Activated naive CD4-positive, alpha-beta T cell treated with anti-CD3 and anti-CD28 coated beads for 36 hours (primary cell): ENCODE measurements at regions of chr11 and their contacts with region 1.

Region 1: GRCh38 chr11:18115360-18116127 is 9.7 kb upstream of the SAAL1 start:
- DNase-seq: peak; percentile 73
- H3K4me3 Mint-ChIP-seq: no peak overlapping the region
- H3K27ac Mint-ChIP-seq: no peak overlapping the region
- H3K4me1 Mint-ChIP-seq: no peaks in the 10 kb centered on the region
- H3K27me3 Mint-ChIP-seq: peaks cover 14% of the 10 kb centered on the region

Region 2: DNA sequence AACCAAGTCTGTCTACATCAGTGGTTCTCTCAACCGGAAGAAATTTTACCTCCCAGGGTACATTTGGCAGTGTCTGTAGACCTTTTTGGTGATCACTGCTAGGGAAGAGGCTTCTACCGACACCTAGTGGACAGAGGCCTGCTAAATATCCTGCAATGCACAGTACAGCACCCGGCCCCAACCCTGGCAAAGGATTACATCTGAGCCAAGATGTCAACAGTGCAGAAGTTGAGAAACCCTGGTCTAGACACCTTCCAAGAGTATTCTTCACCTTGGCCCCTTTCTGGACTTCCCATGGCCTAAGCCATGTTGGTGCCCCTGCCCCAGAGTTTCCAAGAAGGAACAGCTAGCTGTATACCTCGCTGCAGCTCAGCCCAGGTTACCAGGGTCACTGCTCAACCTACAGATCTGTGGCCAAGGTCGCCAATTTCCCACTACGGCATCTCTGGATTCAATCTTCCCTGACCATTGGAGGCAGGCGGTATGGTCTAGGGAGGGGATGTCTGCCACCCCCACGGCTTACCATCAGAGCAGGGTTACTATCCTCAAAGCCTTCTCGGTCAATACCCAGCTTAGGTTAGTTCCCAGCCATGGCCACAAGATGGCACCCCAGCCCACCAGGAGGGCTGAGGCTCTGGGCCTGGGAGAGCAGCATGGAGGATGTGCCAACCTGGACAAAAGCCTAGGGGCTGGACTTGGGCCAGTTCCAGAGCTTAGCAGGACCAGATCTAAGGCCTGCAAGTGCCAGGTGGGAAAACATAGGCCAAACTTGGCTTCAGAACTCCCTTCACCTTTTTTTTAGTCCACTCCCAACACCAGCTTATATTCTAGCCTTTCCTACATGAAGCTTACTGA is 384.7 kb before region 1 on chr11:
- CTCF ChIA-PET with region 1: interaction called, 12 read pairs
- intact Hi-C with region 1: no loop called
- DNase-seq: peak; percentile 80
- H3K4me3 Mint-ChIP-seq: no peak overlapping the region
- H3K27ac Mint-ChIP-seq: no peak overlapping the region
- H3K4me1 Mint-ChIP-seq: peaks cover 5% of the 10 kb centered on the region
- H3K27me3 Mint-ChIP-seq: peaks cover 43% of the 10 kb centered on the region

Region 3: GRCh38 chr11:17839973-17840611 is 275.5 kb before region 1 on chr11:
- CTCF ChIA-PET with region 1: no interaction called
- intact Hi-C with region 1: no loop called
- DNase-seq: no peak
- H3K4me3 Mint-ChIP-seq: no peak overlapping the region
- H3K27ac Mint-ChIP-seq: no peak overlapping the region
- H3K4me1 Mint-ChIP-seq: no peaks in the 10 kb centered on the region
- H3K27me3 Mint-ChIP-seq: no peaks in the 10 kb centered on the region

Region 4: DNA sequence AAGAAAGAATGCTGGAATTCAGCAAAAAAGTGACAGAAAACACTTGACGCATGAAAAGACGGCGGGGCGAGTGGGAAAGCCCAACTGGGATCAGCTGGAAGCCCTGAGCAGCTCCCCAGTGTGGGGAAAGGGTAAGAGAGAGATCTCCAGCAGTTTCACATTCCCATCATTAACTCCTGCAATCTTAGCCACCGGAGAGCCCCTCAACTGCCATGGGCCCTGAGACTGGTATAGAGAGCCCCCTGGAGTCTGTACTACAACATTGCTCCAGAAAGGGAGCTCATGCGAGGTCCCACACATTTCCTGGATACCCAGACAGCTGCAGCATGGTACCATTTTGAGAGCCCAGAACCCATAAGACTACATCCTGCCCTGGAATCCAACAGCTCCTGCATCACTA is 88.2 kb after region 1 on chr11:
- CTCF ChIA-PET with region 1: interaction called, 24 read pairs
- intact Hi-C with region 1: loop called (anchors 1 kb)
- DNase-seq: no peak
- H3K4me3 Mint-ChIP-seq: no peak overlapping the region
- H3K27ac Mint-ChIP-seq: no peak overlapping the region
- H3K4me1 Mint-ChIP-seq: no peaks in the 10 kb centered on the region
- H3K27me3 Mint-ChIP-seq: peaks cover 38% of the 10 kb centered on the region

Region 5: DNA sequence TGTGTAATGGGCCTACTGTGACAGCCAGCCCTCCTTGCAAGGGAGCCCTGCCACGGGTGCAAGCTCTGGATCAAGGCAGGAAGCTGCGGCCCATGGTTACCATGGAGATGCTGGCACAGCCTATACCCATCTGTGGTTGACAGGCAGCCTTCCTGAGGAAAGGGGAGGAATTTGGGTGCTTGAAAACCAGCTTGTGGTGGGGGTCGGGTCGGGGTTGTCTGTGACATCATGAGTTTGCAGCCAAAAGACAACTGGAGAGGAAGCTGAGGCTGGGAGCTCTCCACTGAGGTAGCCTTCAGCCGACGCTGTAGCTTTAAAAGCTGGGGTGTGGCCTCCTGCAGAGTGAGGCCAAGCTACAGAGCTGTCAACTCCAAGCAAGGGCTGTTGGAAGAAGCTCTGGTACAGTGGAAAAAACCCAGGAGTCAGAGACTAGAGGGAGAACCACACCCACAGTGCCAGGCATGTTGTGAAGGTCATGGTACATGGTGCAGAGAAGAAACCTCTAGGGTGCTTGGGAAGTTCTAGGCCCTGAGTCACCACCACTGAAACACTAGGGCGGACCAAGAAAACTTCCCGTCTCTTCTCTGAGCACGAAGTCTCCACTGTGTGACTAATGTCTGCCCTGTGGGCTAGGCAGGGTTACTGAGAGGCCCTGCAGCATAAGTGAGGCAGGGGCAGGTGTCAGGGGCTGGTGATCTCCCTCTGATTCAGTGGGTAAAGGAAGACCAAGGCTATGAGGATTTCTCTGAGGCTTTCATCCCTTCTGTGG is 268.0 kb after region 1 on chr11:
- CTCF ChIA-PET with region 1: no interaction called
- intact Hi-C with region 1: no loop called
- DNase-seq: peak; percentile 92
- H3K4me3 Mint-ChIP-seq: peak overlapping the region; percentile 42
- H3K27ac Mint-ChIP-seq: peak overlapping the region; percentile 89
- H3K4me1 Mint-ChIP-seq: peaks cover 34% of the 10 kb centered on the region
- H3K27me3 Mint-ChIP-seq: no peaks in the 10 kb centered on the region

Region 6: DNA sequence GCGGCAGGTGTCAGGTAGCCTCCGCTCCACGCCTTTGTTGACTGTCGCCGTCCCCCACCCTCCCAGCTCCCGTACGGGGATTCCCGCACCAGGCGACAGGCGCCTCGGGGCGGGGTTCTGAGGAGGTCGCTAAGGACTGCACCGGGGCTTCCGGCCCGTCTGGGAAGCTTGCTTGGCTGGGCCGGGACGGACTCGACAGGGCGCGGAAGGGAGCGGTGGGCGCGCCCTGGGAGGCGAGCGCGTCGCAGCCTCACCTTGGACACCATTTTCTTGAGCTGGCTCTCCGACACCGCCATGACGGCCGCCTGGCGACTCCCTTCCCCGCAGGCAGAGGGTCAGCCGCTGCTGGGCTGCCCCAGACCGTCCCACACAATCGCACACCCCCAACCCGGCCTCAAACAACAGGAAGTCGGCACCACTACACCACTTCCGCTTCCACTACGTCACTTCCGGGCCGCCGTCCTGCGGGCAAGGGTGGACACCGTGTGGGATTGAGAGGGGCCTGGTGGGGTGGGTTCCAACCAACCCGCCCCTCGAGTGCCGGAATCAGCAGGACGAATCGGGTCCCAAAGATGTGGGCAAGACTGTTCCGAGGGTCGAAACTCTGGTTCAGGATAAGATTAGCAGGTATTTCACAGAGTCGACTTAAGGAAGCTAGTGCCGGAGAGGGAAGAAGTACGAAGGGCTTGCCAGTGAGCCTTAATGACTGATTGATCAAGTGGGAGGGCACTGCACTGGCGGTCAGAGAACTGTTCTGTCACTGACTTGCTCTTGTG is 411.2 kb after region 1 on chr11 and contains the start of gene TSG101:
- CTCF ChIA-PET with region 1: interaction called, 4 read pairs
- intact Hi-C with region 1: loop called (anchors 1 kb)
- DNase-seq: peak; percentile 94
- H3K4me3 Mint-ChIP-seq: peak within 1 kb of the TSS; percentile 100
- H3K27ac Mint-ChIP-seq: peak within 1 kb of the TSS; percentile 100
- H3K4me1 Mint-ChIP-seq: peaks cover 45% of the 10 kb centered on the region
- H3K27me3 Mint-ChIP-seq: no peaks in the 10 kb centered on the region
- total RNA-seq, gene TSG101: 33.2 to 40.5 TPM

Region 7: GRCh38 chr11:18650859-18651557 is 535.5 kb after region 1 on chr11:
- CTCF ChIA-PET with region 1: interaction called, 3 read pairs
- intact Hi-C with region 1: loop called (anchors 1 kb)
- DNase-seq: peak; percentile 65
- H3K4me3 Mint-ChIP-seq: no peak overlapping the region
- H3K27ac Mint-ChIP-seq: no peak overlapping the region
- H3K4me1 Mint-ChIP-seq: no peaks in the 10 kb centered on the region
- H3K27me3 Mint-ChIP-seq: no peaks in the 10 kb centered on the region

Region 8: GRCh38 chr11:18768472-18768901 is 652.9 kb after region 1 on chr11:
- CTCF ChIA-PET with region 1: interaction called, 4 read pairs
- intact Hi-C with region 1: loop called (anchors 1 kb)
- DNase-seq: no peak
- H3K4me3 Mint-ChIP-seq: no peak overlapping the region
- H3K27ac Mint-ChIP-seq: no peak overlapping the region
- H3K4me1 Mint-ChIP-seq: peaks cover 8% of the 10 kb centered on the region
- H3K27me3 Mint-ChIP-seq: no peaks in the 10 kb centered on the region